ENCODE measurements at regions of chr18 and their contacts with region 1.

Region 1: GRCh38 chr18:57397440-57397839 is 37.7 kb upstream of the ONECUT2 start:
- DNase-seq: peak; percentile 10
- H3K4me3 ChIP-seq: no peak overlapping the region
- H3K27ac ChIP-seq: no peak overlapping the region
- H3K4me1 ChIP-seq: no peaks in the 10 kb centered on the region
- H3K27me3 ChIP-seq: peaks cover 22% of the 10 kb centered on the region
- CTCF ChIP-seq: no peak

Region 2: DNA sequence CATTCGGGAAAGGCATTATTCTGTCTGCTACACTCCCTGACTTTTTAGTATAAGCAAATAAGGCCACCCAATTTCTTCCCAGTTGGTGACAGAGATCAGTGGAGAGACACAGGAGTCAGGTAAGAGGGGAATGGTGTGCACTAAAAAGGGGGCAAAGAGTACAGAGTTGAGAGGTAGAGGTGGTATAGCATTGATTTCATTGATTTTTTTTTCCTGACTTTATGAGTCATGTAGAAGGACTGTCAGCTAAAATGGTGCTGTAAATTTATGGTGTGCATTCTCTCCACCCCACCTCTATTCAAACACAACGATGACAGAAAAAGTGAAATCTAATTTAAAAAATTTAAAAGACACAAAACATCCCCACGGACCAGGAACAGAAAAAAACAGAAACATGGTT is 68.8 kb before region 1 on chr18:
- CTCF ChIA-PET with region 1: interaction called, 13 read pairs
- POLR2A ChIA-PET with region 1: no interaction called
- intact Hi-C with region 1: no loop called
- DNase-seq: no peak
- H3K4me3 ChIP-seq: no peak overlapping the region
- H3K27ac ChIP-seq: no peak overlapping the region
- H3K4me1 ChIP-seq: no peaks in the 10 kb centered on the region
- H3K27me3 ChIP-seq: peaks cover 48% of the 10 kb centered on the region
- CTCF ChIP-seq: no peak

Region 3: GRCh38 chr18:57410749-57411148 is 13.3 kb after region 1 on chr18:
- CTCF ChIA-PET with region 1: no interaction called
- POLR2A ChIA-PET with region 1: no interaction called
- intact Hi-C with region 1: no loop called
- DNase-seq: no peak
- H3K4me3 ChIP-seq: no peak overlapping the region
- H3K27ac ChIP-seq: no peak overlapping the region
- H3K4me1 ChIP-seq: no peaks in the 10 kb centered on the region
- H3K27me3 ChIP-seq: peaks cover 69% of the 10 kb centered on the region
- CTCF ChIP-seq: no peak